ENCODE measurements at regions of chr9 and their contacts with region 1.

Region 1: DNA sequence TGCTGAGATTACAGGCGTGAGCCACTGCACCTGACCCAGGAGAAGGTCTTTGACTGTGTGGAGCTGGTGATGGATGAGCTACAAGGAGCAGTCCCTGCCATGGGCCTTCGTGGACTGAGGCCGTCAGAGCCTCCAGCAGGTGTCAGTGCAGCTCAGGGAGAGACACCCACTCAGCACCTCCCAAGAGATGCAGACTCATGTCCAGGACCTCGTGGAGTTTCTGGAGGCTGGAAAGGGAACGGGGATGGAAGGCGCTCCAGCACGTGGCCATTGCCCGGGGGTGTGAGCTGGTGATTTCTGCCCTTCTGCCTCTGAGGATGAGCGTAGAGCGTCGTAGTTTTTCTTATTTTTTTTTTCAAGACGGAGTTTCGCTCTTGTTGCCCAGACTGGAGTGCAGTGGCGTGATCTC is 9.5 kb downstream of the TOR4A start:
- DNase-seq: peak; percentile 75
- ATAC-seq: peak; percentile 99
- H3K4me3 Mint-ChIP-seq: no peak overlapping the region
- H3K27ac Mint-ChIP-seq: no peak overlapping the region
- H3K4me1 Mint-ChIP-seq: no peaks in the 10 kb centered on the region
- H3K27me3 Mint-ChIP-seq: peaks cover 26% of the 10 kb centered on the region
- CTCF ChIP-seq: no peak

Region 2: DNA sequence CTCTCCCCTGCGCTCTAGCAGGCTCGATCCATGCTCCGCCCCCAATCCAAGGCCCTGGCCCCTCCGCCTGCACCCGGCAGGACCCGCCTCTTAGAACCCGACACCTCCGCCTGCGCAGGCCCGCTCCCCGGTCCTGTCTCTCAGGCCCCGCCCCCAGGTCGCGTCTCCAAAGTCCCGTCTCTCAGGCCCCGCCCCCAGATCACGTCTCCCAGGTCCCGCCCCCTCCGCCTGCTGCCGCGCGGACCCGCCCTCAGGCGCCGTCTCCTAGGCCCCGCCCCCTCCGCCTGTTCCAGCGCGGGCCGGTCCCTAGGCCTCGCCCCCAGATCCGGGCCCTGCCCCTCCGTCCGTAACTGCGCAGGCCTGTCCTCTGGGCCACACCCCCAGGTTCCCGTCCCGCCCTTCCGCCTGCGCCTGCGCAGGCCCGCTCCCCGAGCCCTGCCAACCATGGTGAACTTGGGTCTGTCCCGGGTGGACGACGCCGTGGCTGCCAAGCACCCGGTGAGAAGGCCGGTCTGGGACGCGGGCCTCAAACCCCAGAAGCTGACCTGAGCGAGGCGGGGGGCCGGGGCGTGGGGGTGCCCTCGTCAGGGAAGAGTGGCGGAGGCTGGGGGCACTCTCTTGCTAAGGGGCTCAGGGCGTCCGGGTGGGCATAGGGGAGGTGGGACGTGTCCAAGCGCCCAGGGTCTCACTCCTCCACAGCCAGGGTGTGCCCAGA is 495.9 kb before region 1 on chr9 and contains the start of gene TMEM141:
- CTCF ChIA-PET with region 1: no interaction called
- POLR2A ChIA-PET with region 1: no interaction called
- DNase-seq: peak; percentile 100
- ATAC-seq: peak; percentile 92
- H3K4me3 Mint-ChIP-seq: peak within 1 kb of the TSS; percentile 78
- H3K27ac Mint-ChIP-seq: peak within 1 kb of the TSS; percentile 88
- H3K4me1 Mint-ChIP-seq: peaks cover 20% of the 10 kb centered on the region
- H3K27me3 Mint-ChIP-seq: peaks cover 5% of the 10 kb centered on the region
- CTCF ChIP-seq: no peak
- total RNA-seq, gene TMEM141: 72.0 to 86.7 TPM (median 86.1 TPM) in 3 replicates

Region 3: GRCh38 chr9:137254624-137255447 is 32.1 kb before region 1 on chr9 and contains the start of gene NELFB:
- CTCF ChIA-PET with region 1: interaction called, 13 read pairs
- POLR2A ChIA-PET with region 1: no interaction called
- DNase-seq: peak; percentile 93
- ATAC-seq: peak; percentile 82
- H3K4me3 Mint-ChIP-seq: peak within 1 kb of the TSS; percentile 94
- H3K27ac Mint-ChIP-seq: peak within 1 kb of the TSS; percentile 86
- H3K4me1 Mint-ChIP-seq: peaks cover 8% of the 10 kb centered on the region
- H3K27me3 Mint-ChIP-seq: peaks cover 7% of the 10 kb centered on the region; the same call in 1 of the 2 replicates
- CTCF ChIP-seq: no peak
- total RNA-seq, gene NELFB: 93.7 to 95.0 TPM (median 94.7 TPM) in 3 replicates

Region 4: GRCh38 chr9:137302176-137302994 is 15.4 kb after region 1 on chr9 and contains the start of gene NRARP:
- CTCF ChIA-PET with region 1: interaction called, 42 read pairs
- POLR2A ChIA-PET with region 1: no interaction called
- DNase-seq: peak; percentile 84
- ATAC-seq: peak; percentile 31
- H3K4me3 Mint-ChIP-seq: peak within 1 kb of the TSS; percentile 94
- H3K27ac Mint-ChIP-seq: peak within 1 kb of the TSS; percentile 84
- H3K4me1 Mint-ChIP-seq: peaks cover 45% of the 10 kb centered on the region
- H3K27me3 Mint-ChIP-seq: peaks cover 20% of the 10 kb centered on the region
- CTCF ChIP-seq: peak; percentile 42; the same call in 1 of the 2 replicates
- total RNA-seq, gene NRARP: 46.7 to 52.4 TPM (median 51.5 TPM) in 3 replicates

Region 5: GRCh38 chr9:137316012-137316976 is 29.3 kb after region 1 on chr9:
- CTCF ChIA-PET with region 1: interaction called, 31 read pairs
- POLR2A ChIA-PET with region 1: no interaction called
- DNase-seq: peak; percentile 63
- ATAC-seq: peak; percentile 62
- H3K4me3 Mint-ChIP-seq: 0 out of 2 replicates have a peak overlapping the region, but pooled peaks have one; percentile 20
- H3K27ac Mint-ChIP-seq: no peak overlapping the region
- H3K4me1 Mint-ChIP-seq: peaks cover 7% of the 10 kb centered on the region; the same call in 1 of the 2 replicates
- H3K27me3 Mint-ChIP-seq: no peaks in the 10 kb centered on the region
- CTCF ChIP-seq: no peak

Region 6: GRCh38 chr9:137374131-137374845 is 87.3 kb after region 1 on chr9:
- CTCF ChIA-PET with region 1: interaction called, 10 read pairs
- POLR2A ChIA-PET with region 1: no interaction called
- DNase-seq: peak; percentile 20
- ATAC-seq: no peak
- H3K4me3 Mint-ChIP-seq: no peak overlapping the region
- H3K27ac Mint-ChIP-seq: no peak overlapping the region
- H3K4me1 Mint-ChIP-seq: no peaks in the 10 kb centered on the region
- H3K27me3 Mint-ChIP-seq: peaks cover 16% of the 10 kb centered on the region
- CTCF ChIP-seq: no peak

Region 7: GRCh38 chr9:137445275-137445807 is 158.4 kb after region 1 on chr9:
- CTCF ChIA-PET with region 1: interaction called, 60 read pairs
- POLR2A ChIA-PET with region 1: no interaction called
- DNase-seq: peak; percentile 90
- ATAC-seq: peak; percentile 39
- H3K4me3 Mint-ChIP-seq: no peak overlapping the region
- H3K27ac Mint-ChIP-seq: no peak overlapping the region
- H3K4me1 Mint-ChIP-seq: peaks cover 5% of the 10 kb centered on the region
- H3K27me3 Mint-ChIP-seq: no peaks in the 10 kb centered on the region; the same call in 1 of the 2 replicates
- CTCF ChIP-seq: peak; percentile 71

Region 8: DNA sequence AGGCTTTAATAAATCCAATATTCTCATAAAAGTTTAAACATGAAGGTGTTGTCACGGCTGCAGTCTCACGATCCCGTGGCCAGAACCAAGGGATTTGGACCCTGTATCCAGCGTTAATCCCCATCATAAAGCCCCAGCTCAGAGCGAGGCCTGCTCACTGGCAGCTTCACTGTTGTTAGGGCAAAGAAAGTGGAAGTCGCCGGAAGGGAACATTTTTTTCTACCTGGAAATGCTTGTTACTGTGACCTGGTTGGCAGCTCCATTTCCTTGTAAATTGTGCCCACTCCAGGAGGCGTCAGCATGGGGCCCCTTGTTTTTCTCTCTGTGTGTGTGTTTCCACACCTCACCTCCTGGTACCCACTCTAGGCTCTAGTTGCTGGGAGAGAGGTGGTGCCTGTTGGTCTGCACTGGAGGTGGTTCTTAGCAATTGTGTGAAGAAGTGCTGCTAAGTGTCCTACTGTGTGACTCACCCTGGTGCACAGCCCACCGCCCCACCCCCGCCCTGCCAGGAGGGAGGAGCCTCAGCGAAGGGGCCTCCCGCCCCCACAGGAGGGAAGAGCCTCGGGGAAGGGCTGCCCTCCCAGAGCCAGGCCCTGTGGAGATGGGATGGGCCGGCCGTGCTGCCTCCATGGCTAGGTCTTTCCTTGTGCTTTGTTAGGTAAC is 436.9 kb after region 1 on chr9:
- CTCF ChIA-PET with region 1: no interaction called
- POLR2A ChIA-PET with region 1: no interaction called
- DNase-seq: peak; percentile 55
- ATAC-seq: peak; percentile 91
- H3K4me3 Mint-ChIP-seq: no peak overlapping the region
- H3K27ac Mint-ChIP-seq: peak overlapping the region; percentile 96
- H3K4me1 Mint-ChIP-seq: peaks cover 30% of the 10 kb centered on the region
- H3K27me3 Mint-ChIP-seq: no peaks in the 10 kb centered on the region
- CTCF ChIP-seq: no peak